GM23248 (cell line): ENCODE measurements at regions of chr10 and their contacts with region 1.

Region 1: GRCh38 chr10:73644015-73644743 is 2.9 kb upstream of the MYOZ1 start:
- DNase-seq: peak; percentile 84
- H3K4me3 ChIP-seq: no peak overlapping the region
- H3K27ac ChIP-seq: no peak overlapping the region
- H3K4me1 ChIP-seq: peaks cover 28% of the 10 kb centered on the region
- H3K27me3 ChIP-seq: no peaks in the 10 kb centered on the region

Region 2: GRCh38 chr10:73413528-73414229 is 230.5 kb before region 1 on chr10 and contains the start of gene ANXA7:
- in situ Hi-C with region 1: no loop called
- DNase-seq: peak; percentile 95
- H3K4me3 ChIP-seq: peak within 1 kb of the TSS; percentile 78
- H3K27ac ChIP-seq: peak within 1 kb of the TSS; percentile 96
- H3K4me1 ChIP-seq: peaks cover 21% of the 10 kb centered on the region
- H3K27me3 ChIP-seq: no peaks in the 10 kb centered on the region
- total RNA-seq, gene ANXA7: 118 and 152 TPM in 2 replicates

Region 3: DNA sequence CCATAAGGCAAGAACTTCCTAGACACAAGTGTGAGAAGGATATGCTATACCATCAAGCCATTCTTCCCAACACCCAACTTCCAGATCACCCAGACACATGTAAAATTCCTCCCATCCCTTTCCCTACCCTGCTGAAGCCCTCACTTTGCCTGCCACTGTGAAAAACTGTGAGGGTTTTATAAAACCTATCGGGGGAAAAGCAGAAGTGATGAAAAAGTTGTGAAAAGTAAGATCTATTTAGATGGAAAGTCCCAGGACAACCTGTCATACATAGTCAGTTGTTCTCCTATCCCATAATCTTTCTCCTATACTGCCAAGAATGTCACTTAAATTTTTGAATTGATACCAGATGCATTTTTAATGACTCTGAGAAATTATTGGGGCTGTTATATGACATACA is 109.3 kb before region 1 on chr10:
- in situ Hi-C with region 1: loop called (anchors 5 kb)
- DNase-seq: no peak
- H3K4me3 ChIP-seq: no peak overlapping the region
- H3K27ac ChIP-seq: no peak overlapping the region
- H3K4me1 ChIP-seq: no peaks in the 10 kb centered on the region
- H3K27me3 ChIP-seq: no peaks in the 10 kb centered on the region

Region 4: GRCh38 chr10:73772280-73773151 is 128.3 kb after region 1 on chr10:
- in situ Hi-C with region 1: no loop called
- DNase-seq: peak; percentile 93
- H3K4me3 ChIP-seq: peak overlapping the region; percentile 76
- H3K27ac ChIP-seq: peak overlapping the region; percentile 92
- H3K4me1 ChIP-seq: peaks cover 24% of the 10 kb centered on the region
- H3K27me3 ChIP-seq: no peaks in the 10 kb centered on the region